ENCODE measurements at regions of chr4 and their contacts with region 1.

Region 1: DNA sequence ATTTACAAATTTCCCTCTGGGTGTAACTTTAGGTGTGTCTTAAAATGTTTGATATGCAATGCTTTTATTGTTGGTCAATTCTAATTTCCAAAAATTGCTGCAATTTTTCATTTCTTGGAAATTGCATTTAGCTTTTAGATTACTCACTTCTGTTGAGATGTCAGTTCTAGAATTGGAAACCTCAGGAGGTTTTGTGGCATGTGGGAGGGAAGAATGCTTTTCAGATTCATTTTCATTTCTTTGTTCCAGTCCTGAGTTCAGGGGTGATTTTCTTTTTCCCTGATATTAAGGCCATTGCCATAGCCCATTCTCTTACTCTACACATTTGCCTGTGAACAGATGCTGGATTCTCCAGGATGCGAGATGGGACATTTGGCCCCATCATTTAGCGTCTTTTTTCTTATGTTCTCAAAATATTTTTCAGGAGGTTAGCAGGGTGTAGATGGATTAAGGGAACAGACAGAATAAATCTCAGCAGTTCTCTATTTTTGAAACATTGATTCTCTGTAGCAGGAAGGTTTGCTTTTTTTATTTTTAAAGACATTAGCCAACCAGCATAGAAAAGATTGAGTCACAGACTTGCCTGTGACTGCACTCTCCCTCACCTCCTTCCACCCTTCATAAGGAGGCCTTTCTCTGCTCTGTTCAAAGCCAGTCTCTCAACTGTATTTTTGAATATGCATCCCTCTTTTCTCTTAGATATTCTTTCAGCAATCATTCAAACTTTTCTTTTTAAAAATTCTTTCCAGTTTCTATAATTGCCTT is 238.4 kb upstream of the ANXA3 start:
- DNase-seq: no peak
- H3K4me3 Mint-ChIP-seq: peak overlapping the region; percentile 38
- H3K27ac Mint-ChIP-seq: no peak overlapping the region
- H3K4me1 Mint-ChIP-seq: peaks cover 20% of the 10 kb centered on the region
- H3K27me3 Mint-ChIP-seq: peaks cover 5% of the 10 kb centered on the region

Region 2: DNA sequence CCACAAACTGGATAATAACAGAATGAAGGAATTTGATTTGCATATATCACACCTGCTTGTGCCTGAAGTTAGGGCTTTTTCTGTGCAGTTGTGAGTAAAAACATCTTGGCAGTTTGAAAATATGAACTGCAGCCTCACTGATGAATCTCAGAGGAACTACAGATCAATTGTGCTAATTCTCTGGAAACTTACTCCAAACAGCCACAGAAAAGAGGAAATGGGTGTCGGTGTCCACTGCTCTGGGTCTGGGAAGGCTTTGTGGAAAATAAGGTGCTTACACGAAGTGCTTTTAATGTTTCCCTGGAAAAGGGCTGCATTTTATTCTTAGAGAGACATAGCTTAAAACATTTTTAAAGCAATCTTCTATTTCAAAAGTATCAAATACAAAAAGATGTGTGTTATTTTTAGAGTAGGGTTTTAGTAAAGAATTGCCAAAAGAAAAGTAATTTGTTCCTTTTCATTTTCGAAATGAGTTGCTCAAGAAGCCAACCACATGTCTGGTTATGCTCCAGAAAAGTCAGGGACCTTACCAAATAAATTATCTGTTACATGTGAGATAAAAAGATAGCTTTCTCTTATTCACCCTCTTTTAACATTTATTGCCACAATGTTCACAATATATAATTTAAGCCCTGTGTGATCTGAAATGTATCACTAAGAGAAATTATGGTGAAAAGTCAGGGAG is 15.9 kb before region 1 on chr4:
- intact Hi-C with region 1: loop called (anchors 2 kb)
- DNase-seq: no peak
- H3K4me3 Mint-ChIP-seq: no peak overlapping the region
- H3K27ac Mint-ChIP-seq: peak overlapping the region; percentile 27
- H3K4me1 Mint-ChIP-seq: peaks cover 5% of the 10 kb centered on the region
- H3K27me3 Mint-ChIP-seq: peaks cover 16% of the 10 kb centered on the region

Region 3: DNA sequence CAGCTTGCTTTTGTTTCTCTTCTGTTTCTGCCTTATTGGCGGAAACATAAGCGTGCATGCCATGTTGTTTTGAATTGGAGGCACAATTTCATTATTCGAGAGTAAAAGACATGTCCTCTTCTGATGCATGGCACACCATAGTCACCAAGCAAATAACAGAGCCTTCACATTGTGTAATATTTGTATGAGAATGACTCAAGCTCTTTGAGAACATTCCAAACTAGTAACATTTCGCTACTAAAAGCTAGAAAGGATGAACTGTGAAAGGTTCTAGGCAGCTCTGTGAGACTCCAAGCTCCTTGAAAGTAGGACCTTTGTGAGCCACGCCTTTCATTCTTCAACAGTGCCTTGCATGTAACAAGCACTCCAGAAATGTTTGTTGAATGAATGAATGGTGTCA is 229.2 kb after region 1 on chr4:
- intact Hi-C with region 1: no loop called
- DNase-seq: no peak
- H3K4me3 Mint-ChIP-seq: no peak overlapping the region
- H3K27ac Mint-ChIP-seq: no peak overlapping the region
- H3K4me1 Mint-ChIP-seq: no peaks in the 10 kb centered on the region
- H3K27me3 Mint-ChIP-seq: peaks cover 33% of the 10 kb centered on the region

Region 4: GRCh38 chr4:78661921-78662521 is 348.9 kb after region 1 on chr4:
- intact Hi-C with region 1: loop called (anchors 5 kb)
- DNase-seq: peak; percentile 66
- H3K4me3 Mint-ChIP-seq: peak overlapping the region; percentile 11
- H3K27ac Mint-ChIP-seq: no peak overlapping the region
- H3K4me1 Mint-ChIP-seq: peaks cover 58% of the 10 kb centered on the region
- H3K27me3 Mint-ChIP-seq: peaks cover 1% of the 10 kb centered on the region

Measured in activated CD4-positive, alpha-beta T cell treated with anti-CD3 and anti-CD28 coated beads, Interleukin-2, amount 10 ng/mL, durations not matched to agents 24 days and 14 days (primary cell).